ENCODE measurements at regions of chr16 and their contacts with region 1.

Region 1: DNA sequence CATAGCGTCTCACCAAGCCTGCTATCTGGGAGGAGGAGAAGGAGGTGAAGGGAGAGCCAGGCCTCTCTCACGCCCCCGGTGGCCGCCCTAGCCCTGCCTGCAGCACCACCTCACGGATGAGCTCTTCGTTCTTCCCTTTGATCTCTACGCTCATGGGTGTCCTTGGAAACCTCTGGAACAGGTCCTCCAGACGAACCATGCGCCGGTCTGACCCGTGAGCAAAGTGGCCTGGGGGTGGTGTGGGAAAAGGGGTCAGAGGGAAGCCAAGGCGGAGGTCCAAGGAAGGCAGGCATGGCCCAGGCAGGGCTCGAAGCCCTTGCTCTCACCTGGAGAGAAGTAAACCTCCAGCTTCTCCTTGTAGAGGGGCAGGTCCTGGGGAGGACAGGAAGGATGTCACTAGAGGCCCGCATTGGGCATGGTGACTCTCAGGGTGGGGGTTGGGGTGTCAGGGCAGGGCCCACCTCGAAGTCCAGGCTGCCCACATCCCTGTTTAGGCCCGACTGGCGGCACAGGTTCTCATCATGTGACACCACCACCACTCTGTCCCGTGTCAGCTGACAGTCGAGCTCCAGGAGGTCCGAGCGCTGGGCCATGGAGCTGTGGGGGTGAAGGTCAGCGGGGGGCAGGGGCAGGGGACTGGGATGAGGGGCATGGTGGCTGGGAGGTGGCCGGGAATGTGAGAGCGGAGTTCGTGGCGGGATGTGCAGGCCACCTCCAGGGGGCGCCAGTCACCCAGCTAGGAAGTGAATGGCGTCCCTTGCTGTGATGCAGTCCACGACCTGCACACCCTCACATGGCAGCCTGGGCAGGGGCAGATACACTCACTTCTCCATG is 923 bp downstream of the GDPD3 start:
- DNase-seq: no peak
- H3K4me3 ChIP-seq: no peak overlapping the region
- CTCF ChIP-seq: peak; percentile 45

Region 2: DNA sequence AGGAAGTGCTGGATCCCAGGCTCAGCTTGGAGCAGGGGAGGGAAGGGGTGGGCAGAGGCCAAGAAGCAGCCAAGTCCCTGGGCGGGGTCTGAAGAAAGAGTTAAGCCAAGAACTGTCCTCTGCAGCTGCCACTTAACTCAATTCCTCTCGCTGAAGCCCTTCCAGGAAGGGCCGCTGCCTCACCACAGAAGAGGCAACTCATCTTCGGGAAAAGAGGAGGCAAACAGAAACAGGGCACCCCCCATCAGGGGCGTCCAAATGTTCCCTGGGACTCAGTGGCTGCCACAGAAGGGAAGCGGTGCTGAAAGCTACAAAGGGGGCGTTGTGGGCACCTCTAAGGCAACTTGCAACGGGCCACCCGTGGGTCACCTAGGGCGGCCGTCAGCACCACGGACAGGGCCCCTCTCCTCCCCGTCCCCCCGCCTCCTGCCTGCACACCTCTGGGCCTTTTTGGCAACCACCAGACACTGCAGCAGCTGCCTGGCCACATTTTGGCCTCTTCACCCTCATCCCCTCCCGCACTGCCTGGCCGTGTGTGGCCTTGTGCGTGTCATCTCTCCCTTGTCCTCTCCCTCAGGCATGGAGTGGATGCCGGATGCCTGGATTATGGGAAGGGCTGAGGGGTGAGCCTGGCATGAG is 83.9 kb before region 1 on chr16:
- in situ Hi-C with region 1: no loop called
- DNase-seq: no peak
- H3K4me3 ChIP-seq: no peak overlapping the region
- CTCF ChIP-seq: no peak

Region 3: DNA sequence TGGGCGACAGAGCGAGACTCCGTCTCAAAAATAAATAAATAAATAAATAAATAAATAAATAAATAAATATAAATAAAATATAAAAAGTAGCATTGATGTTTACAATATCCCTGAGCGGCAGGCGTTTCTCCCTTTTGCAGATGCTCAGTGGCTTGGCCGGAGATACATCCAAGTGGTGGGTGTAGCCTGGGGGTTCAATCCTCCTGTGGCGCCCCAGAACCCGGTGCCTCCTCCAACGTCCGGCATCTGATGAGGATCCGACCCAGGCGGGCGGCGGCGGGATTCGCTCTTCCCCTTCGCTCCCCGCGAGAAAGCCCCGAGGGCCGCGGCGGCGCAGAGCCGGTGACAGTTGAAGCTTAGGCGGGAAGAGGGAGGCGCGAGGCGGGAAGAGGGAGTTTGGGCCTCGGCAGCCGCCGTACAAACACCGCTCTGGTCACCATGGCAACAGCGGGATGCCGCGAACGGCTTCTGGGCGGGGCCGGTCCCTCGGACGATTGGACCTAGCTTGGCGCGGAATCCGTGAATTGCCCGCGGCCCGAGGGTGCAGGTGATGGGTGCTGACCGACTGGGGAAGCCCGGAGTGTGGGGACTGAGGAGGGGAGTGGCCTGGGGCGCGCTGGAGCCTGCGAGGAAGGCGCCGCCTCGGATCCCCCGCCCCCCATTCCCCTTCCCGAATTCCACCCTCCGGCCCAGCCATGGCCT is 59.6 kb before region 1 on chr16:
- in situ Hi-C with region 1: loop called (anchors 5 kb)
- DNase-seq: peak; percentile 69
- H3K4me3 ChIP-seq: peak overlapping the region; percentile 87
- CTCF ChIP-seq: no peak

Region 4: DNA sequence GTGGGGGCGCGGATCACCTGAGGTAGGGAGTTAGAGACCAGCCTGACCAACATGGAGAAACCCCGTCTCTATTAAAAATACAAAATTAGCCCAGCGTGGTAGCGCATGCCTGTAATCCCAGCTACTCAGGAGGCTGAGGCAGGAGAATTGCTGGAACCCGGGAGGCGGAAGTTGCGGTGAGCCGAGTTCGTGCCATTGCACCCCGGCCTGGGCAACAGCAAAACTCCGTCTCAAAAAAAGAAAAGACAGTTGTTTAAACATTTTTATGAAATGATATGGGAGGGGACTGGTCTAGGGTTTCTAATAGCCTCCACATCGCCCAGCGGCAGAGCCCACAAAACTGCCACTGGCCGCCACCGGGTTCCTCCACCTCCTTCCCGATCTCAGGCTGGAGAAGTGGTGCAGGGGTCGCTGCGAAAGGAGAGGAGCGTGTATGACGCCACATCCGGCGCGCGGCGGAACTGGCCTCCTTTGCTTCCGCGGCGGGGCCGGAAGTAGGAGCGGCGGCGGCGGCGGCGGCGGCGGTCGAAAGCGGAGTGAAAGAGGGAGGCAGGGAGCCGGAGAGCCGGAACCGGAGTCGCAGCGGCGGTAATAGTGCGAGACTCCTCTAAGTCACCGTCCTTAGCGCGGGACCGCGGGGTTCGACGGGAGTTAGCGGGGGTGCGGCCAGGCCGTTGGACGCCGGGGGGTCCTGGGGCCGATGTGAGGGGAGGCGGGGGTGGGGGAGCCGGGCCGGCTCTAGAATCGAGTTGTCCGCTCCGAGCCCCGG is 36.7 kb before region 1 on chr16 and contains the start of gene PPP4C:
- in situ Hi-C with region 1: loop called (anchors 5 kb)
- DNase-seq: peak; percentile 62
- H3K4me3 ChIP-seq: peak within 1 kb of the TSS; percentile 97
- CTCF ChIP-seq: no peak

Region 5: GRCh38 chr16:30370444-30371247 is 258.2 kb after region 1 on chr16 and contains the start of gene TBC1D10B:
- in situ Hi-C with region 1: loop called (anchors 10 kb)
- DNase-seq: peak; percentile 100
- H3K4me3 ChIP-seq: peak within 1 kb of the TSS; percentile 70
- CTCF ChIP-seq: peak; percentile 15